Naive thymus-derived CD4-positive, alpha-beta T cell (primary cell): ENCODE measurements at regions of chr7 and their contacts with region 1.

Region 1: DNA sequence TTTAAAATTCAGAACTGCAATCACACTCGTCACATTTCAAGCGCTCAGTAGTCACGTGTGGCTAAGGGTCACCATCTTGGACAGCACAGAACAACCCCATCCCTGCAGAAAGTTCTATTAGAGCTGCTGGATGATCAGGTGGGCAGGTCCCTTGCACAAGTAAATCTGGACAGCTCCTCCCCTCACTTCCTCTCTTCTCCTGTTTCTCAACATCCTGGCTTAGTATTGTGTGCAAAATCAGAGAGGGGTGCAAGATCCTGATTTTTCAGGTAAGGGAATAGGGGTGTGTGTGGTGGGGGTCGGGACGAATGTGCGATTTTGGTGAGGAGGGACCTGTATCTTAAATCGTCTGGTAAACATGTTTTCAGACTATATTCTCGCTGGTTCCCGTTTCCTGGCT is at the start of gene GIMAP4:
- DNase-seq: peak in 4 of 9 donors; percentile 21 to 53 (median 42)
- ATAC-seq: peak; percentile 58
- H3K4me3 ChIP-seq: peak within 1 kb of the TSS; percentile 92
- H3K4me3 Mint-ChIP-seq: peak within 1 kb of the TSS; percentile 87 to 99 (median 96)
- H3K27ac ChIP-seq: peak within 1 kb of the TSS; percentile 84
- H3K27ac Mint-ChIP-seq: peak within 1 kb of the TSS; percentile 92 to 99 (median 97)
- H3K4me1 ChIP-seq: peaks cover 45 to 68% of the 10 kb centered on the region in 2 donors
- H3K4me1 Mint-ChIP-seq: peaks cover 39 to 81% (median 70%) of the 10 kb centered on the region in 7 donors
- H3K27me3 ChIP-seq: no peaks in the 10 kb centered on the region
- H3K27me3 Mint-ChIP-seq: no peaks in the 10 kb centered on the region
- total RNA-seq, gene GIMAP4: 74.9 to 413 (median 406) TPM

Region 2: GRCh38 chr7:149822353-149822943 is 744.7 kb before region 1 on chr7:
- CTCF ChIA-PET with region 1: no interaction called
- POLR2A ChIA-PET with region 1: no interaction called
- intact Hi-C with region 1: no loop called
- DNase-seq: no peak
- ATAC-seq: no peak
- H3K4me3 ChIP-seq: no peak overlapping the region
- H3K4me3 Mint-ChIP-seq: no peak overlapping the region
- H3K27ac ChIP-seq: no peak overlapping the region
- H3K27ac Mint-ChIP-seq: no peak overlapping the region
- H3K4me1 ChIP-seq: no peaks in the 10 kb centered on the region
- H3K4me1 Mint-ChIP-seq: no peaks in the 10 kb centered on the region
- H3K27me3 ChIP-seq: no peaks in the 10 kb centered on the region
- H3K27me3 Mint-ChIP-seq: no peaks in the 10 kb centered on the region

Region 3: GRCh38 chr7:150003304-150003810 is 563.8 kb before region 1 on chr7:
- CTCF ChIA-PET with region 1: no interaction called
- POLR2A ChIA-PET with region 1: no interaction called
- intact Hi-C with region 1: no loop called
- DNase-seq: no peak
- ATAC-seq: peak; percentile 58
- H3K4me3 ChIP-seq: no peak overlapping the region
- H3K4me3 Mint-ChIP-seq: no peak overlapping the region
- H3K27ac ChIP-seq: no peak overlapping the region
- H3K27ac Mint-ChIP-seq: no peak overlapping the region
- H3K4me1 ChIP-seq: no peaks in the 10 kb centered on the region
- H3K4me1 Mint-ChIP-seq: no peaks in the 10 kb centered on the region
- H3K27me3 ChIP-seq: no peaks in the 10 kb centered on the region
- H3K27me3 Mint-ChIP-seq: no peaks in the 10 kb centered on the region

Region 4: GRCh38 chr7:150481186-150481920 is 85.8 kb before region 1 on chr7:
- CTCF ChIA-PET with region 1: interaction called, 3 read pairs
- POLR2A ChIA-PET with region 1: interaction called, 73 read pairs
- intact Hi-C with region 1: no loop called
- DNase-seq: peak in 8 of 9 donors; percentile 46 to 81 (median 71)
- ATAC-seq: peak; percentile 68
- H3K4me3 ChIP-seq: peak overlapping the region; percentile 12
- H3K4me3 Mint-ChIP-seq: peak overlapping the region; percentile 79 to 97 (median 90)
- H3K27ac ChIP-seq: peak overlapping the region; percentile 95
- H3K27ac Mint-ChIP-seq: peak overlapping the region; percentile 97 to 100 (median 100)
- H3K4me1 ChIP-seq: peaks cover 84 to 89% of the 10 kb centered on the region in 2 donors
- H3K4me1 Mint-ChIP-seq: peaks cover 58 to 99% (median 92%) of the 10 kb centered on the region in 7 donors
- H3K27me3 ChIP-seq: no peaks in the 10 kb centered on the region
- H3K27me3 Mint-ChIP-seq: no peaks in the 10 kb centered on the region

Region 5: DNA sequence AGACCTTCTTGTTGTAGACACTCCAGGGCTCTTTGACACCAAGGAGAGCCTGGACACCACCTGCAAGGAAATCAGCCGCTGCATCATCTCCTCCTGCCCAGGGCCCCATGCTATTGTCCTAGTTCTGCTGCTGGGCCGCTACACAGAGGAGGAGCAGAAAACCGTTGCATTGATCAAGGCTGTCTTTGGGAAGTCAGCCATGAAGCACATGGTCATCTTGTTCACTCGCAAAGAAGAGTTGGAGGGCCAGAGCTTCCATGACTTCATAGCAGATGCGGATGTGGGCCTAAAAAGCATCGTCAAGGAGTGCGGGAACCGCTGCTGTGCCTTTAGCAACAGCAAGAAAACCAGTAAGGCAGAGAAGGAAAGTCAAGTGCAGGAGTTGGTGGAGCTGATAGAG is 47.0 kb before region 1 on chr7:
- CTCF ChIA-PET with region 1: interaction called, 20 read pairs
- POLR2A ChIA-PET with region 1: interaction called, 526 read pairs
- intact Hi-C with region 1: loop called (anchors 1 kb)
- DNase-seq: peak in 4 of 9 donors; percentile 17 to 51 (median 42)
- ATAC-seq: peak; percentile 29
- H3K4me3 ChIP-seq: peak overlapping the region; percentile 59
- H3K4me3 Mint-ChIP-seq: peak overlapping the region; percentile 93 to 100 (median 99)
- H3K27ac ChIP-seq: peak overlapping the region; percentile 84
- H3K27ac Mint-ChIP-seq: peak overlapping the region; percentile 80 to 98 (median 94)
- H3K4me1 ChIP-seq: peaks cover 8 to 9% of the 10 kb centered on the region in 2 donors
- H3K4me1 Mint-ChIP-seq: peaks cover 22 to 42% (median 36%) of the 10 kb centered on the region in 7 donors
- H3K27me3 ChIP-seq: no peaks in the 10 kb centered on the region
- H3K27me3 Mint-ChIP-seq: no peaks in the 10 kb centered on the region

Region 6: GRCh38 chr7:150620617-150621371 is 53.6 kb after region 1 on chr7:
- CTCF ChIA-PET with region 1: interaction called, 11 read pairs
- POLR2A ChIA-PET with region 1: interaction called, 327 read pairs
- intact Hi-C with region 1: loop called in 1 of 2 experiments (anchors 2 kb)
- DNase-seq: no peak
- ATAC-seq: no peak
- H3K4me3 ChIP-seq: no peak overlapping the region
- H3K4me3 Mint-ChIP-seq: peak overlapping the region; percentile 27 to 73 (median 54)
- H3K27ac ChIP-seq: peak overlapping the region; percentile 60
- H3K27ac Mint-ChIP-seq: peak overlapping the region; percentile 64 to 97 (median 88)
- H3K4me1 ChIP-seq: peaks cover 0 to 25% of the 10 kb centered on the region in 2 donors
- H3K4me1 Mint-ChIP-seq: peaks cover 25 to 84% (median 68%) of the 10 kb centered on the region in 7 donors
- H3K27me3 ChIP-seq: no peaks in the 10 kb centered on the region
- H3K27me3 Mint-ChIP-seq: no peaks in the 10 kb centered on the region

Region 7: GRCh38 chr7:150685219-150686029 is 118.3 kb after region 1 on chr7 and contains the start of gene GIMAP2:
- CTCF ChIA-PET with region 1: interaction called, 7 read pairs
- POLR2A ChIA-PET with region 1: interaction called, 103 read pairs
- intact Hi-C with region 1: loop called in 1 of 2 experiments (anchors 1 kb)
- DNase-seq: peak in 7 of 9 donors; percentile 40 to 73 (median 65)
- ATAC-seq: peak; percentile 90
- H3K4me3 ChIP-seq: peak within 1 kb of the TSS; percentile 97
- H3K4me3 Mint-ChIP-seq: peak within 1 kb of the TSS; percentile 88 to 100 (median 98)
- H3K27ac ChIP-seq: peak within 1 kb of the TSS; percentile 78
- H3K27ac Mint-ChIP-seq: peak within 1 kb of the TSS; percentile 91 to 100 (median 97)
- H3K4me1 ChIP-seq: peaks cover 49 to 53% of the 10 kb centered on the region in 2 donors
- H3K4me1 Mint-ChIP-seq: peaks cover 50 to 87% (median 81%) of the 10 kb centered on the region in 7 donors
- H3K27me3 ChIP-seq: no peaks in the 10 kb centered on the region
- H3K27me3 Mint-ChIP-seq: no peaks in the 10 kb centered on the region
- total RNA-seq, gene GIMAP2: 79.4 to 286 (median 122) TPM

Region 8: DNA sequence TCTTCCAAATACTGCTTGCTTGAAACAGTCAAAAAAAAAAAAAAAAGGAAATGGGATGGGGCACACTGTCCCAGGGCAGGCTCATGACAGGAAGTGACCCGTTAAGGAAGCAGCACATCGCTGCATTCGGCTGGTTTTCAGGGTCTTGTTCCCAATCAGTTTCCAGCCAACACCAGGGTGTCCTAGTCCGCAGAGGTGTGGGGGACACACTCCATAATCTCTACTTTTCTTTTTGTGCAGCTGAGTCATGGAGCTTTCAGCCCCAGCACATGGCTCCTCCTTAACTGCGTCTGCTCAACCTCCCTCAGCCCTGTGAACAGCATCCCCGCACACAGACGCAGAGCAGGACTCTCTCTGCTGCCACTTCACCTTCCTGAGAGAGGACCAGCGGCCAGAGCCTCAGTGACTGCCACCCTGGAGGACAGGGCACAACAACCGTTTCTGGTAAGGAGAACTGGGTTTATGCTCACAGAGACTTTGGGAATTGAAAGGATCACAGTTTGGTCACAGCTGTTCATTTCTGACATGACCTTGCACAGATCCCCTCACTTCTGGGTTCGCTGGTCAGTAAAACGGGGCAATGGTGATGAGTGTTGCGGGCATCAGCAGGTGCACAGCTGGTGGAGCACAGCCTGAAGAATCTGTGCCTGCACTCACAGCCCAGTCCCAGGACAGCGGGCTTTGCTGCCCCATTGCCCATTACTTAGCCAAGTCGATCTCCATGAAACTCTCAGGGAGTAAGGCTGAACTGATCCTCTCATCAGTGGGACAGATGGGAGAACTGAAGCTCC is 170.3 kb after region 1 on chr7 and contains the start of gene GIMAP5:
- CTCF ChIA-PET with region 1: interaction called, 6 read pairs
- POLR2A ChIA-PET with region 1: interaction called, 254 read pairs
- intact Hi-C with region 1: loop called (anchors 1 to 2 kb)
- DNase-seq: peak in 6 of 9 donors; percentile 47 to 57 (median 56)
- ATAC-seq: peak; percentile 79
- H3K4me3 ChIP-seq: peak within 1 kb of the TSS; percentile 84
- H3K4me3 Mint-ChIP-seq: peak within 1 kb of the TSS; percentile 90 to 100 (median 98)
- H3K27ac ChIP-seq: peak within 1 kb of the TSS; percentile 82
- H3K27ac Mint-ChIP-seq: peak within 1 kb of the TSS; percentile 87 to 99 (median 96)
- H3K4me1 ChIP-seq: peaks cover 49 to 56% of the 10 kb centered on the region in 2 donors
- H3K4me1 Mint-ChIP-seq: peaks cover 56 to 73% (median 65%) of the 10 kb centered on the region in 7 donors
- H3K27me3 ChIP-seq: no peaks in the 10 kb centered on the region
- H3K27me3 Mint-ChIP-seq: no peaks in the 10 kb centered on the region
- total RNA-seq, gene GIMAP5: 58.1 to 422 (median 214) TPM